GM12878 (cell line): ENCODE measurements at regions of chr14 and their contacts with region 1.

Region 1: GRCh38 chr14:75063407-75064213 is at the start of gene ACYP1:
- DNase-seq: peak; percentile 56
- ATAC-seq: peak; percentile 98
- H3K4me3 ChIP-seq: peak within 1 kb of the TSS; percentile 98
- H3K27ac ChIP-seq: peak within 1 kb of the TSS; percentile 60
- H3K4me1 ChIP-seq: peaks cover 5% of the 10 kb centered on the region
- H3K27me3 ChIP-seq: no peaks in the 10 kb centered on the region
- CTCF ChIP-seq: no peak
- EP300 ChIP-seq: no peak
- POLR2A ChIP-seq: peak; percentile 82
- RAD21 ChIP-seq: no peak
- polyA plus RNA-seq, gene ACYP1: 48.5 to 49.4 TPM

Region 2: DNA sequence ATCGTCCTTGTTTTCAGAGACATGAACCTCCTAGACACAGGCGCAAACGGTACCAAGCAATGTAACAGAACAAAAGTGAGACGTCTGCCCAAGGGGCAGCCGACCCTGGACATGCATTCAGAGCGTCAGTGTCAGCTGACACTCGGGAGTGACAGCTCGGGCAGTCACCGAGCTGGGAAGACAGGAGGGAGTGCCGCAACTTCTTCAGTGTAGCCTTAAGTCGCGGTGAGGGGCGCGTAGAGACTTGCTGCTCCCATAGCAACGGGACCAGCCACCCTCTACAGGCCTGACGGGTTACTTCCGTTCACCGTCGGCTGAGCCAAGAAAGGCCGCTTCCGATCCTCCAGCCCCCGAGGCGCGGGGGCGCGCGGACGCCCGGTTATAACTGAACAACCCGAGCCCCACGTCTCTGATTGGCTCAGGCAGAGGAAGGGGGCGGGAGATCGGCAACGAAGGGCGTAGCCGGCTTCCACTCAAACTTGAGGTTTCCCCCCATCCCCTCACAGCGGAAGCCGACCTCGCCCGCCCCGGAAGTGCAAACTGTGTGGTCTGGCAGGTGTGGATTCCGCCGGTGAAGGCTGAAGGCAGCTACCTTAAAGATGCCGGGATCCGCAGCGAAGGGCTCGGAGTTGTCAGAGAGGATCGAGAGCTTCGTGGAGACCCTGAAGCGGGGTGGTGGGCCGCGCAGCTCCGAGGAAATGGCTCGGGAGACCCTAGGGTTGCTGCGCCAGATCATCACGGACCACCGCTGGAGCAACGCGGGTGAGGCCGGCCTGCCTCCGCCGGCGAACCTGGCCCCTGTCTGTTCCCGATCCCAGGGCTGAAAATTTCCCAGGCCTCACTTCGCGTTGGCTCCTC is 61.0 kb before region 1 on chr14 and contains the start of gene EIF2B2:
- CTCF ChIA-PET with region 1: interaction called, 4 read pairs
- POLR2A ChIA-PET with region 1: interaction called, 4 read pairs
- RAD21 ChIA-PET with region 1: interaction called, 12 read pairs
- SMC1A ChIA-PET with region 1: interaction called, 3 read pairs
- in situ Hi-C with region 1: no loop called
- intact Hi-C with region 1: no loop called
- DNase-seq: peak; percentile 95
- ATAC-seq: peak; percentile 99
- H3K4me3 ChIP-seq: peak within 1 kb of the TSS; percentile 94
- H3K27ac ChIP-seq: peak within 1 kb of the TSS; percentile 78
- H3K4me1 ChIP-seq: peaks cover 4% of the 10 kb centered on the region
- H3K27me3 ChIP-seq: no peaks in the 10 kb centered on the region
- CTCF ChIP-seq: peak in 1 of 3 experiments; percentile 23; a peak in 1 of 6 replicates
- EP300 ChIP-seq: no peak; a peak in 1 of 4 replicates
- POLR2A ChIP-seq: peak; percentile 82
- RAD21 ChIP-seq: no peak
- polyA plus RNA-seq, gene EIF2B2: 17.4 to 32.3 TPM

Region 3: GRCh38 chr14:75044322-75044721 is 19.3 kb before region 1 on chr14:
- CTCF ChIA-PET with region 1: interaction called, 7 read pairs
- POLR2A ChIA-PET with region 1: interaction called, 19 read pairs
- RAD21 ChIA-PET with region 1: interaction called, 13 read pairs
- SMC1A ChIA-PET with region 1: interaction called, 14 read pairs
- in situ Hi-C with region 1: no loop called
- intact Hi-C with region 1: no loop called
- DNase-seq: no peak
- ATAC-seq: no peak
- H3K4me3 ChIP-seq: no peak overlapping the region
- H3K27ac ChIP-seq: no peak overlapping the region
- H3K4me1 ChIP-seq: no peaks in the 10 kb centered on the region
- H3K27me3 ChIP-seq: no peaks in the 10 kb centered on the region
- CTCF ChIP-seq: no peak
- EP300 ChIP-seq: no peak
- POLR2A ChIP-seq: no peak
- RAD21 ChIP-seq: no peak

Region 4: DNA sequence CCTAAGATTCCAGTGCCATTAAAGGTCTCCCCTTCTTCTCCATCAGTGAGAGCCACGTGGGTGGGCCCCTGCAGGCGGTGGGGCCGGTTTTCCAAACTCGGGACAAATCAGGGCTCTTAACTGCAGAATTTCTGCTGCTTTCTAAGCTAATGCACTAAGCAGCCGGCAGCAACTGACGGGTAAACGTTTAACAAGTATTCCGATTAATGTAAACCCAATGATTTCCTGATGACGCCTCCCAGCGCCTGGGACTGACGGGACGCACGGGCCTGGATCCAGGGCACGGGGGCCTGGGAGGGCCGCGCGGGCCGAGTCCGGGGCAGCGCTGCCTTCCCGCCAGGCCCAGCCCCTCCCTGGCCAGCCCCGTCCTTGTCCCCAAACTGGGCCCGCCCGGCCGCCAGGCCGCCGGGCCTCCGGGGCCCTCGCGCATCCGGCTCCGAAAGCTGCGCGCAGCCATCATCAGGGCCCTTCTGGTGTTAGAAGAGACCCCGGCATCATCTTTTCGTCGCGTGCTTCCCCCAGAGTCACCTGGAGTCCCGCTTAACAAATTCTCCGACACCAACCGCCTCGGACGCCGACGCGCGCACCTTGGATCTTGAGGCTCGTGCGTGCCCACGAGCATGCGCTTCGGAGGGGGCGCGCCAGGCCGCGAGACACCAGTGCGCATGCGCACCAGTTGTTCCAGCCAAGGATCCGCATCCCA is 12.6 kb before region 1 on chr14 and contains the start of gene MLH3:
- CTCF ChIA-PET with region 1: interaction called, 7 read pairs
- POLR2A ChIA-PET with region 1: interaction called, 19 read pairs
- RAD21 ChIA-PET with region 1: interaction called, 13 read pairs
- SMC1A ChIA-PET with region 1: interaction called, 15 read pairs
- in situ Hi-C with region 1: no loop called
- intact Hi-C with region 1: no loop called
- DNase-seq: no peak
- ATAC-seq: peak; percentile 94
- H3K4me3 ChIP-seq: peak within 1 kb of the TSS; percentile 65
- H3K27ac ChIP-seq: peak within 1 kb of the TSS; percentile 77
- H3K4me1 ChIP-seq: no peaks in the 10 kb centered on the region
- H3K27me3 ChIP-seq: no peaks in the 10 kb centered on the region
- CTCF ChIP-seq: no peak
- EP300 ChIP-seq: no peak
- POLR2A ChIP-seq: peak; percentile 82
- RAD21 ChIP-seq: no peak
- polyA plus RNA-seq, gene MLH3: 17.9 to 23.4 TPM

Region 5: DNA sequence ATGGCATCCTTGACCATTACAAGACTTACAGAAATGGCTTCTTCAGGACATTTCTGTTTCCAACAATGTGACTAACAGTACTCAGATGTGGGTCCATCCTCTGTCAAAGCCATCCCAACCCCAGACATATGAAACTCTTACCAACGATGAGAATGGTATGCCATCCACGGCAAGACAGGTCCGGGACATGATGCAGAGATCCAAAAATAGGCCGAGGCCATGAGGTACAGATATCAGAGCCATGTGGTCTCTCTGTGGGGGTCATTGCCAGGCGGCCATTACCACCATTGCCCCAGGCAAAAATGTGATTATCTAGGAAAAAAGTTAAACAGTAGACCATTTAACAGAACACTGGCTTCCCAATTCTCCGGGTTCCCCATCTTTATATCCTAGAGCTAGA is 33.3 kb after region 1 on chr14:
- CTCF ChIA-PET with region 1: no interaction called
- POLR2A ChIA-PET with region 1: no interaction called
- RAD21 ChIA-PET with region 1: no interaction called
- SMC1A ChIA-PET with region 1: no interaction called
- in situ Hi-C with region 1: no loop called
- intact Hi-C with region 1: no loop called
- DNase-seq: no peak
- ATAC-seq: no peak
- H3K4me3 ChIP-seq: no peak overlapping the region
- H3K27ac ChIP-seq: no peak overlapping the region
- H3K4me1 ChIP-seq: no peaks in the 10 kb centered on the region
- H3K27me3 ChIP-seq: no peaks in the 10 kb centered on the region
- CTCF ChIP-seq: no peak
- EP300 ChIP-seq: no peak
- POLR2A ChIP-seq: no peak
- RAD21 ChIP-seq: no peak